CD8-positive, alpha-beta T cell (primary cell): ENCODE measurements at regions of chr12 and their contacts with region 1.

Region 1: DNA sequence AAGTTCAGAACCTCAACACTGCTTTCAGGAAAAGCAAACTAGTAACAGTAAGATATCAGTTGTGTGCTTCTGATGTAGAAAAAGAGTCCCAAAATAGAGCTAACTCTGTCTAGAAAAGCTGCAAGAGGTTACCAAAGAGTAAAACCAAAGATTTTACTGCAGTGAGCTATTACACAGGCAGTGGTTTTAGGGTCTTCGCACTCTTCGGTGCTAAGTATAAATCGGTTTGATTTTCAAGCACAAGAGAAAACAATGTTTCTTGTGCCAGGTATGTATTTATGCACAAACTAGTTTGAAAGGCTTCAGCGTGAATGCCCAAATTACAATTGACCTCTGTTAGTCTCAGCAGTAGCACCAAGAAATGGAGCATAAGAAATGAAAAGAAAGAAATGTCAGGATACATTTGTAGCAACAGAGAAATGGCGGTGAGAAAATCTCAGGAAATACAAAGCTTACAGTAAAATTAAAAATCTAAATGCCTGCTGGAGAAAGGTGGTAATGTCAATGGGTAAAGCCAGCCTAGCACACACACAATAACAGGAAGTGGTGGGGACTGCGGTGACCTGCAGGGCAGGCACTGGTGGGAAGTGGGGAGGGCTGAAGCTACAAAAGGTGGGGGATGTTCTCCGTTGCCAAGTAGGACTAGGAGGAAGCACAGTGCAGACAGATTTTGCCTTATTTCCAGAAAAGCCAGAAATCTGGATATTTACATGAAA is 18.0 kb upstream of the DYRK2 start:
- DNase-seq: peak; percentile 72 to 97 (median 87)
- ATAC-seq: peak; percentile 98
- H3K4me3 ChIP-seq: peak overlapping the region; percentile 23 to 33
- H3K4me3 Mint-ChIP-seq: peak overlapping the region; percentile 75
- H3K27ac ChIP-seq: peak overlapping the region; percentile 67 to 70
- H3K27ac Mint-ChIP-seq: peak overlapping the region; percentile 95
- H3K4me1 ChIP-seq: peaks cover 93% of the 10 kb centered on the region
- H3K4me1 Mint-ChIP-seq: peaks cover 92% of the 10 kb centered on the region
- H3K27me3 ChIP-seq: no peaks in the 10 kb centered on the region
- H3K27me3 Mint-ChIP-seq: no peaks in the 10 kb centered on the region
- CTCF ChIP-seq: peak; percentile 64

Region 2: GRCh38 chr12:67441736-67442346 is 188.7 kb before region 1 on chr12:
- CTCF ChIA-PET with region 1: interaction called, 7 read pairs
- POLR2A ChIA-PET with region 1: interaction called, 4 read pairs
- intact Hi-C with region 1: loop called in 1 of 2 experiments (anchors 1 kb)
- DNase-seq: peak; percentile 55 to 89 (median 80)
- ATAC-seq: peak; percentile 98
- H3K4me3 ChIP-seq: no peak overlapping the region
- H3K4me3 Mint-ChIP-seq: peak overlapping the region; percentile 45
- H3K27ac ChIP-seq: no peak overlapping the region
- H3K27ac Mint-ChIP-seq: peak overlapping the region; percentile 60
- H3K4me1 ChIP-seq: peaks cover 13% of the 10 kb centered on the region
- H3K4me1 Mint-ChIP-seq: peaks cover 26% of the 10 kb centered on the region
- H3K27me3 ChIP-seq: no peaks in the 10 kb centered on the region
- H3K27me3 Mint-ChIP-seq: no peaks in the 10 kb centered on the region
- CTCF ChIP-seq: peak; percentile 70

Region 3: GRCh38 chr12:67515679-67516340 is 114.7 kb before region 1 on chr12:
- CTCF ChIA-PET with region 1: interaction called, 12 read pairs
- POLR2A ChIA-PET with region 1: interaction called, 21 read pairs
- intact Hi-C with region 1: no loop called
- DNase-seq: peak in 8 of 9 experiments; percentile 8 to 76 (median 44)
- ATAC-seq: peak; percentile 81
- H3K4me3 ChIP-seq: peak overlapping the region in 1 of 2 experiments; percentile 13
- H3K4me3 Mint-ChIP-seq: peak overlapping the region; percentile 63
- H3K27ac ChIP-seq: peak overlapping the region in 1 of 2 experiments; percentile 63
- H3K27ac Mint-ChIP-seq: peak overlapping the region; percentile 83
- H3K4me1 ChIP-seq: peaks cover 41% of the 10 kb centered on the region
- H3K4me1 Mint-ChIP-seq: peaks cover 54% of the 10 kb centered on the region
- H3K27me3 ChIP-seq: no peaks in the 10 kb centered on the region
- H3K27me3 Mint-ChIP-seq: no peaks in the 10 kb centered on the region
- CTCF ChIP-seq: no peak

Region 4: GRCh38 chr12:67578976-67579661 is 51.4 kb before region 1 on chr12:
- CTCF ChIA-PET with region 1: interaction called, 16 read pairs
- POLR2A ChIA-PET with region 1: interaction called, 42 read pairs
- intact Hi-C with region 1: loop called in 1 of 2 experiments (anchors 1 kb)
- DNase-seq: peak in 6 of 9 experiments; percentile 4 to 71 (median 28)
- ATAC-seq: peak; percentile 78
- H3K4me3 ChIP-seq: peak overlapping the region; percentile 4 to 21
- H3K4me3 Mint-ChIP-seq: peak overlapping the region; percentile 56
- H3K27ac ChIP-seq: peak overlapping the region; percentile 11 to 76
- H3K27ac Mint-ChIP-seq: peak overlapping the region; percentile 69
- H3K4me1 ChIP-seq: peaks cover 34% of the 10 kb centered on the region
- H3K4me1 Mint-ChIP-seq: peaks cover 57% of the 10 kb centered on the region
- H3K27me3 ChIP-seq: no peaks in the 10 kb centered on the region
- H3K27me3 Mint-ChIP-seq: no peaks in the 10 kb centered on the region
- CTCF ChIP-seq: no peak

Region 5: GRCh38 chr12:67617619-67618018 is 12.9 kb before region 1 on chr12:
- CTCF ChIA-PET with region 1: interaction called, 3 read pairs
- POLR2A ChIA-PET with region 1: interaction called, 9 read pairs
- intact Hi-C with region 1: loop called in 1 of 2 experiments (anchors 2 kb)
- DNase-seq: no peak
- ATAC-seq: no peak
- H3K4me3 ChIP-seq: no peak overlapping the region
- H3K4me3 Mint-ChIP-seq: no peak overlapping the region
- H3K27ac ChIP-seq: no peak overlapping the region
- H3K27ac Mint-ChIP-seq: no peak overlapping the region
- H3K4me1 ChIP-seq: no peaks in the 10 kb centered on the region
- H3K4me1 Mint-ChIP-seq: peaks cover 17% of the 10 kb centered on the region
- H3K27me3 ChIP-seq: no peaks in the 10 kb centered on the region
- H3K27me3 Mint-ChIP-seq: no peaks in the 10 kb centered on the region
- CTCF ChIP-seq: no peak

Region 6: DNA sequence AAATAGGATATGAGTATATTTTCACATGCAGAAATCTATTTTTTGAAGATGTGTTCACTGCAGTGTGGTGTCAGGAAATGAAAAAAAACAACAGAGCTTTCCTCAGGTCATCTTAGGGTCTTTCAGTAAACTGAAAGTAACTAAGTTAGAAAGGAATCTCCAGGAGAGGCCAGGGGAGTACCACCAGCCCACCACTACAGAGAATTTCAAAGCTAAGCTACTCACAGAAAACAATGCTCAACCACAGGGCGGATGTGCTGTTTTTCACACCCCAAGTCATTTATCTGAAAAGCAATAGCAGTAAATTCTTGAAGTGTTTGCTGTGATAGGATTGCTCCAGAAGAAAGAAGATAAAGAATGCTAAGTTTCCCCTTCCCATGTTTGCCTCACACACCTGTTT is 450.0 kb after region 1 on chr12:
- CTCF ChIA-PET with region 1: no interaction called
- POLR2A ChIA-PET with region 1: no interaction called
- intact Hi-C with region 1: no loop called
- DNase-seq: peak; percentile 2 to 80 (median 34)
- ATAC-seq: peak; percentile 78
- H3K4me3 ChIP-seq: no peak overlapping the region
- H3K4me3 Mint-ChIP-seq: no peak overlapping the region
- H3K27ac ChIP-seq: peak overlapping the region in 1 of 2 experiments; percentile 43
- H3K27ac Mint-ChIP-seq: peak overlapping the region; percentile 49
- H3K4me1 ChIP-seq: peaks cover 21% of the 10 kb centered on the region
- H3K4me1 Mint-ChIP-seq: peaks cover 29% of the 10 kb centered on the region
- H3K27me3 ChIP-seq: no peaks in the 10 kb centered on the region
- H3K27me3 Mint-ChIP-seq: no peaks in the 10 kb centered on the region
- CTCF ChIP-seq: no peak